PC-3 (cell line): ENCODE measurements at regions of chr6 and their contacts with region 1.

Region 1: DNA sequence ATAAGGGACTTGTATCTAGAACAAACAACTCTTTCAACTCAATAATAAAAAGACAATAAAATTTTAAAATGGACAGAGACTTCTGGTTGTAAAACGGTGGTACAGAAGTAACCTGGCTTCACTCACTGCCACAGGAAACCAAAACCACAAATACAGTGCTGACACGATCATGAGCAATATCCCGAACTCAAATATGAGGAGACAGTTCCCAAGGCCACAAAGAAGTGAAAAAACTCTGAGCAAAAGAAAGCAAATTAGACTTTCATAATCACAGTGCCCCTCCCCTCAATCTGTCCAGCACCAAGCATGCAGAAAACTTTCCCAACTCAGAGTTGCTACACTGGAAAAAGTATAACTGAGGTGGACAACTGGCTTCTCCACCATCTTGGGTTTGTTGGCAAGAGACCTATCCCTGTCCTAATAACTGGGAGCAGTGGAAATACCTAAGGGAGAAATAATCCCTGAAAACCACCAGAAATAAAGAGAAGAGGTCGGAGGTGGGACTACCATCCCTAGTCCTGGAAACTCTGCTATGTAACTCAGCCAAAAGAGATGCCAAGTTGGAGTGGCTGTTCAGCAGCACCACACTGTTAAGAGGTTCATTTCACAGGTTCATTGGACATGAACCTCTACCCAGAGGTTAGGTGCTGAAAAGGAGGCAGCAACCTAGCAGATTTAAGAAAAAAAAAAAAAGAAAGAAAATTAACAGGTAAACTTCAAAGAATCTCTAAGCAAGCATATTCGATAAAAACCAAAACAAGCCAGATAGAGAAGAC is 55.5 kb downstream of the REV3L start:
- DNase-seq: peak; percentile 91
- ATAC-seq: peak; percentile 97
- H3K4me3 ChIP-seq: peak overlapping the region; percentile 41
- H3K27ac ChIP-seq: peak overlapping the region; percentile 91
- H3K4me1 ChIP-seq: peaks cover 47% of the 10 kb centered on the region
- H3K27me3 ChIP-seq: no peaks in the 10 kb centered on the region
- CTCF ChIP-seq: no peak

Region 2: GRCh38 chr6:111382476-111383300 is 44.8 kb before region 1 on chr6:
- CTCF ChIA-PET with region 1: no interaction called
- POLR2A ChIA-PET with region 1: no interaction called
- intact Hi-C with region 1: loop called (anchors 5 kb)
- DNase-seq: no peak
- ATAC-seq: no peak
- H3K4me3 ChIP-seq: no peak overlapping the region
- H3K27ac ChIP-seq: no peak overlapping the region
- H3K4me1 ChIP-seq: peaks cover 12% of the 10 kb centered on the region
- H3K27me3 ChIP-seq: no peaks in the 10 kb centered on the region
- CTCF ChIP-seq: no peak

Region 3: GRCh38 chr6:111406200-111406721 is 21.3 kb before region 1 on chr6:
- CTCF ChIA-PET with region 1: no interaction called
- POLR2A ChIA-PET with region 1: no interaction called
- intact Hi-C with region 1: no loop called
- DNase-seq: no peak
- ATAC-seq: no peak
- H3K4me3 ChIP-seq: no peak overlapping the region
- H3K27ac ChIP-seq: no peak overlapping the region
- H3K4me1 ChIP-seq: no peaks in the 10 kb centered on the region
- H3K27me3 ChIP-seq: no peaks in the 10 kb centered on the region
- CTCF ChIP-seq: no peak

Region 4: DNA sequence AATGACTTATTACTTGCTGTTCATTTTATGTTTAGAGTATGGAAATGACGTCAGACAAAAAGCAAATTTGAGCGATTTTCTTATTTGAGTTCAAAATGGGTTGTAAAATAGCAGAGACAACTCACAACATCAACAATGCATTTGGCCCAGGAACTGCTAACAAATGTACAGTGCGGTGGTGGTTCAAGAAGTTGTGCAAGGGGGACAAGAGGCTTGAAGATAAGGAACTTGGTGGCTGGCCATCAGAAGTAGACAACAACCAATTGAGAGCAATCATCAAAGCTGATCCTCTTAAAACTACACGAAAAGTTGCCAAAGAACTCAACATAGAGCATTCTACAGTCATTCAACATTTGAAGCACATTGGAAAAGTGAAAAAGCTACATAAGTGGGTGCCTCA is 11.6 kb after region 1 on chr6:
- CTCF ChIA-PET with region 1: no interaction called
- POLR2A ChIA-PET with region 1: no interaction called
- intact Hi-C with region 1: no loop called
- DNase-seq: no peak
- ATAC-seq: no peak
- H3K4me3 ChIP-seq: no peak overlapping the region
- H3K27ac ChIP-seq: no peak overlapping the region
- H3K4me1 ChIP-seq: no peaks in the 10 kb centered on the region
- H3K27me3 ChIP-seq: no peaks in the 10 kb centered on the region
- CTCF ChIP-seq: no peak

Region 5: GRCh38 chr6:111450636-111451035 is 23.1 kb after region 1 on chr6:
- CTCF ChIA-PET with region 1: no interaction called
- POLR2A ChIA-PET with region 1: no interaction called
- intact Hi-C with region 1: loop called (anchors 2 kb)
- DNase-seq: no peak
- ATAC-seq: no peak
- H3K4me3 ChIP-seq: no peak overlapping the region
- H3K27ac ChIP-seq: no peak overlapping the region
- H3K4me1 ChIP-seq: peaks cover 5% of the 10 kb centered on the region; the same call in 1 of the 2 replicates
- H3K27me3 ChIP-seq: no peaks in the 10 kb centered on the region
- CTCF ChIP-seq: no peak

Region 6: GRCh38 chr6:111471958-111472357 is 44.4 kb after region 1 on chr6:
- CTCF ChIA-PET with region 1: no interaction called
- POLR2A ChIA-PET with region 1: no interaction called
- intact Hi-C with region 1: no loop called
- DNase-seq: no peak
- ATAC-seq: no peak
- H3K4me3 ChIP-seq: no peak overlapping the region
- H3K27ac ChIP-seq: no peak overlapping the region
- H3K4me1 ChIP-seq: peaks cover 21% of the 10 kb centered on the region
- H3K27me3 ChIP-seq: no peaks in the 10 kb centered on the region
- CTCF ChIP-seq: no peak